Mammary epithelial cell (primary cell): ENCODE measurements at regions of chr15 and their contacts with region 1.

Region 1: DNA sequence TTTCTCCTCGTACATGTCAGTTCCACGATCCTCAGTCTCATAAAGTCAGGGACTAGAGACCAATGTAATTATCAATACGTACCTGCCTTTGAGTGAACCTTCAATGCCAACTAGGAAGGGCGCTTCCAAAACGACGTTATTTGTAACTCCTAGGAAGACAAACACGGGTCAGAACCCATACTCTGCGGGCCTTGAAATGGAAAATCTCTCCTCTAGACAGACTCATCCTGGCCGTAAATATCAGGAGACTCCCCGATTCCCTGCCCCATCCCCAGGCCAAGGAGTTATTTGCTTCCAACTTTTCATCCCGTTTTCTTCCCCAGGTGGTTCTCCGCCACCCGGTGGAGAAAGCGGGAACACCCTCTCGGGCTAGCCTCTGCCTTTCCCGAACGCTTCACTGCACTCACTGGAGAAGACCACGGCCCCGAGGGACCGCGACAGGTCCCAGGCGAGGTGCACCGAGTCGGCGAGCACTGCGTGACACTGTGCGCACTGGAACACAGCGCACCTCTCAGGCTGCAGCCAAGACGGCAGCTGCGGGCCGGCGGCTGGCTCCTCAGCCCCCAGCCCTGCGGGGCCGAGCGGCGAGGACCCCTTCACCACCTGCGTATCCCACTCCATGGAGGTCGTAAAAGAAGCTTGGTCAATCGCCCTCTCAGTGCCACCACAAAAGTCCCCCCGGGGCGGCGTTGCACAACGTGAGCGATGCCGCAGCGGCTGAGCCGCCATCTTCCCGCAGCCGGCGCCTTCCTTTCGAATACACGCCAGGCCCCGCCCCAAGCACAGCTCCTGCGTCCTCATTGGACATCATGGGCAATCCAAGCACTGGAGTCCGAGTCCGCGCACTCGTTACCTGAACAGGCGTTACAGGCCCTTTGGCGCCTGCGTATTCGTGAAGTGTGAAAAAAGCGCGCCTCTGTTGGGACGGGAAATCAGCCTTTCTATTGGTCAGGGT is at the start of gene OIP5:
- DNase-seq: peak; percentile 100
- H3K4me3 ChIP-seq: peak within 1 kb of the TSS; percentile 59 to 100 (median 74)
- H3K27ac ChIP-seq: peak within 1 kb of the TSS; percentile 85
- H3K4me1 ChIP-seq: peaks cover 14% of the 10 kb centered on the region
- H3K27me3 ChIP-seq: no peaks in the 10 kb centered on the region
- CTCF ChIP-seq: peak; percentile 73 to 84
- total RNA-seq, gene OIP5: 1.3 to 8.0 TPM

Region 2: DNA sequence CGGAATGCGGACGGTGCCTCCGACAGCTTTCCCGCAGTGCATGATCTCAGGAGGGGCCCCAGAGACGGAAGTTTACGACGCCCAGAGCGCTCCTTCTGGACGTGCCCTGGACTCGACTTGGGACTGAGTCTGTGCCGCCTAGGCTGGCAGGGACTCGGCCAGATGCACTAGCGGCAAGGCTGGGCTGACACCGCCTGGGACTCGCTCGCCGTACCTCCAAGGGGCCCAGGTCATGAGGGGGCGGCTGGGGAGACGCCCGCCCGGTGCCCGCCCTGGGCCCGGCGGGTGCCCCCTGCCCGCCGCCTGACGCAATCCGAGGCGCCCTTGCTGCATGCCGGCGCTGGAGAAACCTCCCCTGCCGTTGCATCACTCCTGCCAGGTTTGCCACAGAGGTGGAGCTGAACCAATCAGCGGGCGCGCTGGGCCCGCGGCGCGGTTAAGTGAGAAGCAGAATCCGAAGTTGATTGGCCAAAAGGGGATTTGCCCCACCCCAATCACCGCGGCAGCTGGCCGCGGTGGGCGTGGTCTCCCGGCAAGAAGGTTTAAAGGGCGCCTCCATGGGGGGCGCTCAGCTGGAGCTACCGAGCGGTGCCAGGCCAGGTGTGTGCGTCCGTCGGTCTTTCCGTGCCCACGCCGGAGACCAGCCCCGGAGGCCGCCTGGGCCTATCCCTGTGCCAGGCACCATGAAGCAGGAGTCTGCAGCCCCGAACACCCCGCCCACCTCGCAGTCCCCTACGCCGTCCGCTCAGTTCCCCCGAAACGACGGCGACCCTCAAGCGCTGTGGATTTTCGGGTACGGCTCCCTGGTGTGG is 379.0 kb before region 1 on chr15 and contains the start of gene CHAC1:
- CTCF ChIA-PET with region 1: no interaction called
- dilution Hi-C with region 1: no loop called
- in situ Hi-C with region 1: no loop called
- intact Hi-C with region 1: loop called (anchors 10 kb)
- DNase-seq: peak; percentile 95
- H3K4me3 ChIP-seq: peak within 1 kb of the TSS; percentile 81 to 93 (median 87)
- H3K27ac ChIP-seq: peak within 1 kb of the TSS; percentile 85
- H3K4me1 ChIP-seq: peaks cover 14% of the 10 kb centered on the region
- H3K27me3 ChIP-seq: no peaks in the 10 kb centered on the region
- CTCF ChIP-seq: peak in 1 of 2 donors; percentile 6
- total RNA-seq, gene CHAC1: 72.4 to 127 TPM

Region 3: GRCh38 chr15:41116116-41116871 is 215.8 kb before region 1 on chr15 and contains the start of gene INO80:
- CTCF ChIA-PET with region 1: no interaction called
- dilution Hi-C with region 1: no loop called
- in situ Hi-C with region 1: no loop called
- intact Hi-C with region 1: loop called (anchors 1 kb)
- DNase-seq: peak; percentile 98
- H3K4me3 ChIP-seq: peak within 1 kb of the TSS; percentile 84 to 92 (median 89)
- H3K27ac ChIP-seq: peak within 1 kb of the TSS; percentile 100
- H3K4me1 ChIP-seq: peaks cover 9% of the 10 kb centered on the region
- H3K27me3 ChIP-seq: no peaks in the 10 kb centered on the region
- CTCF ChIP-seq: no peak
- total RNA-seq, gene INO80: 14.0 to 28.0 TPM

Region 4: DNA sequence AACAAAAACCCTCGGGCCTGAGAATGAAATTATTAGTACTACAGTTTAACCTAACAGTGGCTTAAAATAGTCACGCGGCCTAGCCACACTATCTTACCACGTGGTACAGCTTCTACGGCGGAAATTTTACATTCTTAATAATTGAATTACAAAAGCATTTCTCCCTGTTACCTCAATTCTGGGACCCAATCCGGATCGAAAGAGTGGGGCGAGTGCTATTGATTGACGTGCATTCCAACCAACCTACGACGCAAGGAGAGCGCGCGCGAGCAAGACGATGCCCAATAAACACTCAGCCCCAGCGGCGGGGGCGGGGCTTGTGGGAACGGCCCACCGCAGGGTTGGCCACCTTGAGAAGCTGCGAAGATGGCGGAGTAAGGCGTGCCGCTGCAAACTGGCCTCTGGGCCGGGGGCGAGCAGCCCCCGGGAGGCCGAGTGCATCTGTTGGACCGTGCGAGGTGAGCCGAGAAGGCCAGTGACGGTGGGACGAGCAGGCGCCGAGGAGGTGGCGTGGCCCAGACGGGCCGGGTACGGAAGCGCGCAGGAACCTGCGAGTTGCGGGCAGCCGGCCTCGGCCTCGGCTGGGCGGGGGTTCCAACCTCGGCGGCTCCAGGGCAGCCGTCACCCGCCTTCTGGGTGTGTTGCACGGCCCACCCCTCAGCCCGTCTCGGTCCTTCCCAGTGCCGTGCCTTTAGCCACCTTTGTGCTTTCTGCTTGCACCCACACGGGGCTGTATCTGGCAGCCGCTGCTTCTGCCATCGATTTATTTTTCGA is 48.3 kb before region 1 on chr15:
- CTCF ChIA-PET with region 1: no interaction called
- dilution Hi-C with region 1: no loop called
- in situ Hi-C with region 1: no loop called
- intact Hi-C with region 1: loop called (anchors 1 kb)
- DNase-seq: peak; percentile 98
- H3K4me3 ChIP-seq: peak overlapping the region; percentile 71 to 98 (median 92)
- H3K27ac ChIP-seq: peak overlapping the region; percentile 77
- H3K4me1 ChIP-seq: peaks cover 11% of the 10 kb centered on the region
- H3K27me3 ChIP-seq: no peaks in the 10 kb centered on the region
- CTCF ChIP-seq: no peak

Region 5: DNA sequence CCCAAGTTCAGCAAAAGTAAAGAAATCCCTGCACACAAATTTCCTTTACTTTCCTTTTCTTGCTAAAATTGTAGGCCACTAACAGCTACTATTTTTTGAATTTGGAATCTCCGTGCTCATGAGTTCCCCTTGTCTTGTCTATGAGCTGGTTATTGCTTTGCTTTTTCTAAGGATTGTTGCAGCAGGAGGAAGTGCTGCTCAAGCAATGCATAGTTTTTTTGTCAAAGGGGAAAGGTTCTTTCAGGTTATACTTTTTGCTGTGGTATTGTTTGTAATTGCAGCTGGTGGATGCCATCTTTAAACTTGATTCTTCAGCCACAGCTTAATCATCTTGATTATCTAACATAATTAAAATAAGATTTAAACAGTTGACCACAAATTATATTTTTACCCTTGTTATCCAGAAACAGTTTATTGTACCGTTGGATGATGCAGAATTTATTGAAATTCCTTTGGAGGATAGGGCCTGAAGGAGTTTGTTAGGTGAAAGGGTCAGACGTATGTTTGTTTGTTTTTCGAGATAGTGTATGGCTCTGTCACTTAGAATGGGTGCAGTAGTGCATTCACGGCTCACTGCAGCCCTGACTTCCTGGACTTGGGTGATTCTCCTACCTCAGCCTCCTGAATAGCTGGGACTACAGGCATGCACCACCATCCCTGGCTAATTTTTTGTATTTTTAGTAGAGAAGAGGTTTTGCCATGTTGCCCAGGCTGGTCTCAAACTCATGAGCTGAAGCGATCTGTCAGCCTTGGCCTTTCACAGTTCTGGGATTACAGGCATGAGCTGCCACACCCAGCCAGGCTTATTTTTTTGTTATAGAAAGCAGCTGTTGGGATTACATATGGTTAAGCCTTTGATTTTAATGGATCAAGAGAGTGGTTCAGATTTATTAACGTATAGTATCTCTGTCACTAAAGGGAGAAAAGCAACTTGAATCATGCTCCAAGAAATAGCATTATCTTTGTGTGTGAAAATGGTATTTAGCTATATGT is 339.8 kb after region 1 on chr15:
- CTCF ChIA-PET with region 1: no interaction called
- dilution Hi-C with region 1: no loop called
- in situ Hi-C with region 1: no loop called
- intact Hi-C with region 1: no loop called
- DNase-seq: no peak
- H3K4me3 ChIP-seq: no peak overlapping the region
- H3K27ac ChIP-seq: no peak overlapping the region
- H3K4me1 ChIP-seq: no peaks in the 10 kb centered on the region
- H3K27me3 ChIP-seq: no peaks in the 10 kb centered on the region
- CTCF ChIP-seq: no peak